PC-9 (cell line): ENCODE measurements at regions of chr7 and their contacts with region 1.

Region 1: DNA sequence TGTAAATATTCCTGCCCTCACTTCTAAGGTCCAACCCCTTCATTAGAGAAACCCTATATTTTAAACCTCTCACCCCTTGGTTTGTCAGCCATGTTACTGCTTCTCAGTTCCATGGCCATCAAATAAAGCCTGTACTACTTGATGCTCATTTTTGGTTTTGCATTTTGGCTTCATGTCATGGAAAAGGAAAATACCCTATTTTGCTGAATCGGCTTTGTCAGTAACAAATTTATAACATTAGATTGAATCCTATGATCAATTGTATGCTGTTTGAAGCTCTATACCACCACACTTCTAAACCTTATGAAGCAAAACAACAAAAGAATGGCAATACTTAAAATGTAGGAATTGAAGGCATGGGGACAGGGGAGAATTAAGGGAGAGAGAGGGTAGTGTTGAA is 333.1 kb downstream of the ETV1 start:
- DNase-seq: no peak
- H3K4me3 ChIP-seq: no peak overlapping the region
- H3K27ac ChIP-seq: no peak overlapping the region
- H3K4me1 ChIP-seq: no peaks in the 10 kb centered on the region
- H3K27me3 ChIP-seq: no peaks in the 10 kb centered on the region
- CTCF ChIP-seq: no peak

Region 2: GRCh38 chr7:13821152-13821787 is 164.9 kb after region 1 on chr7:
- CTCF ChIA-PET with region 1: no interaction called
- POLR2A ChIA-PET with region 1: no interaction called
- intact Hi-C with region 1: no loop called
- DNase-seq: no peak
- H3K4me3 ChIP-seq: no peak overlapping the region
- H3K27ac ChIP-seq: no peak overlapping the region
- H3K4me1 ChIP-seq: no peaks in the 10 kb centered on the region
- H3K27me3 ChIP-seq: no peaks in the 10 kb centered on the region
- CTCF ChIP-seq: no peak

Region 3: DNA sequence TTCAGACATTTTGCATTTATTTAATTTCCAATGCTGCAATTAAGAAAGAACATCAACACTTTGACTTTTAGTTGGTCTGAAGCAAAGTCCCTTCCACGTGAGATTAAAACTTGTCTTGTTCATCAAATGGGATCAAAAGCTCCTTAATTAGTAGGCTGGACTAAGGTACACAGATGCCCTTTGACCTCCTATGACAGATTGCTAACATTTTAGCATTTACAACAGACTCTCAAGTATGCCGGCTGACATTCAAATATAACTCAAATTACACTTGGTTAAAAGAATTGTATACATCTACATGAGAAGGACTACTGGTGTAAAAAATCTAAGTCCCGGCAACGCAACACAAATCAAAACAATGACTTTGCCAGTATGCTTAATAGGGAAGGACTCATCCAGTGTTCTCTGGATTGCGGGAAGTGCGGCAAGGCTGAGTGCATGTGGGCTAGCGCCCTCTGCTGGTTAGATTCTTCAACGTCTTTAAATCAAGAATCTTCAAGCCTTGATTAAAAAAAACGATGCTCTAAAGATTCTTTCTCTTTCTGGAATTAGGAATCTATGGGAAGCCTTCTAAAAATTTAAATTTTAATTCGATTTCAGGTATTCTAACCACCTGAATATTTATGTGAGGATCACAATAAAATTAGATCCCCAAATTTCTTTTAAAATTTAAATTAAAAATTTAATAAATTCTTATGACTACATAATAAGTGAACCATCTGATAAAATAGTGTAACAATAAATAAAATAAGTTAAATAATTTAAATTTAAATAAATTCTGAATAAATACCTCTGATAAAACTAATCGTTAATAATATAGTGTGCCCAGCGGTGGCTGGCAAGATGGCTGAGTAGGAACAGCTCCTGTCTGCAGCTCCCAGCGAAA is 801.5 kb after region 1 on chr7:
- CTCF ChIA-PET with region 1: no interaction called
- POLR2A ChIA-PET with region 1: no interaction called
- intact Hi-C with region 1: loop called (anchors 5 kb)
- DNase-seq: peak; percentile 66 to 68
- H3K4me3 ChIP-seq: peak overlapping the region; percentile 6; the same call in 1 of the 2 replicates
- H3K27ac ChIP-seq: no peak overlapping the region
- H3K4me1 ChIP-seq: no peaks in the 10 kb centered on the region
- H3K27me3 ChIP-seq: no peaks in the 10 kb centered on the region
- CTCF ChIP-seq: peak; percentile 98